Thyroid gland (tissue), 4 donors: ENCODE measurements at regions of chr19 and their contacts with region 1.

Region 1: GRCh38 chr19:35716801-35717666 is 769 bp upstream of the KMT2B start:
- DNase-seq: peak; percentile 97
- H3K4me3 ChIP-seq: peak overlapping the region; percentile 43 to 88 (median 49)
- H3K27ac ChIP-seq: peak overlapping the region; percentile 72 to 90 (median 78)
- H3K4me1 ChIP-seq: peaks cover 18 to 23% of the 10 kb centered on the region in 2 donors
- H3K27me3 ChIP-seq: no peaks in the 10 kb centered on the region
- CTCF ChIP-seq: peak; percentile 50 to 97 (median 92)
- POLR2A ChIP-seq: peak in 1 of 2 donors; percentile 26

Region 2: GRCh38 chr19:35693830-35694599 is 23.0 kb before region 1 on chr19:
- intact Hi-C with region 1: loop called (anchors 2 kb)
- DNase-seq: peak; percentile 89 to 90
- H3K4me3 ChIP-seq: no peak overlapping the region
- H3K27ac ChIP-seq: no peak overlapping the region
- H3K4me1 ChIP-seq: no peaks in the 10 kb centered on the region
- H3K27me3 ChIP-seq: no peaks in the 10 kb centered on the region
- CTCF ChIP-seq: peak; percentile 94 to 99 (median 98)
- POLR2A ChIP-seq: no peak